ENCODE measurements at regions of chr10 and their contacts with region 1.

Region 1: GRCh38 chr10:75210282-75211006 is at the start of gene VDAC2:
- DNase-seq: peak; percentile 94 to 100 (median 98)
- H3K4me3 ChIP-seq: peak within 1 kb of the TSS; percentile 96 to 100
- H3K4me3 Mint-ChIP-seq: peak within 1 kb of the TSS; percentile 98 to 100 (median 100)
- H3K27ac ChIP-seq: peak within 1 kb of the TSS; percentile 97
- H3K27ac Mint-ChIP-seq: peak within 1 kb of the TSS; percentile 96 to 100 (median 100)
- H3K4me1 ChIP-seq: peaks cover 31% of the 10 kb centered on the region
- H3K4me1 Mint-ChIP-seq: peaks cover 18 to 35% (median 26%) of the 10 kb centered on the region in 4 donors
- H3K27me3 ChIP-seq: no peaks in the 10 kb centered on the region
- H3K27me3 Mint-ChIP-seq: no peaks in the 10 kb centered on the region
- total RNA-seq, gene VDAC2: 76.9 to 79.0 TPM

Region 2: DNA sequence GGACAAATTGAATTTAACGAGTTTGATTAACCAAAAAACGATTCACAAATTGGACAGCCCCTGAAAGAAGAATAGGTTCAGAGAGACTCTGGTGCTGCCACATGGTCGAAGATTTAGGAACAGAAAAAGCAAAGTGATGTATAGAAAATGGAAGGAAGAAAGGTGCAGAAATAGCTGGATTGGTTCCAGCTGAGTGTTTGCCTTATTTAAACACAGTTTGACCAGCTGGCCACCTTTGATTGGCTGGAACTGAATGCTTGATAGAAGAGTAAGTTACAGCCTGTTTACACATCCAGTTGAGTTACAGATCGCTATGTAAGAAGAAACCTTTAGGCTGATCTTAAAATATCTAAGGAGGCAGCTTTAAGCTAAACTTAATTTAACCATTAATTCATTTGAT is 424.4 kb before region 1 on chr10:
- CTCF ChIA-PET with region 1: no interaction called
- POLR2A ChIA-PET with region 1: no interaction called
- intact Hi-C with region 1: no loop called
- DNase-seq: no peak
- H3K4me3 ChIP-seq: no peak overlapping the region
- H3K4me3 Mint-ChIP-seq: no peak overlapping the region
- H3K27ac ChIP-seq: no peak overlapping the region
- H3K27ac Mint-ChIP-seq: no peak overlapping the region
- H3K4me1 ChIP-seq: no peaks in the 10 kb centered on the region
- H3K4me1 Mint-ChIP-seq: no peaks in the 10 kb centered on the region
- H3K27me3 ChIP-seq: no peaks in the 10 kb centered on the region
- H3K27me3 Mint-ChIP-seq: no peaks in the 10 kb centered on the region

Region 3: DNA sequence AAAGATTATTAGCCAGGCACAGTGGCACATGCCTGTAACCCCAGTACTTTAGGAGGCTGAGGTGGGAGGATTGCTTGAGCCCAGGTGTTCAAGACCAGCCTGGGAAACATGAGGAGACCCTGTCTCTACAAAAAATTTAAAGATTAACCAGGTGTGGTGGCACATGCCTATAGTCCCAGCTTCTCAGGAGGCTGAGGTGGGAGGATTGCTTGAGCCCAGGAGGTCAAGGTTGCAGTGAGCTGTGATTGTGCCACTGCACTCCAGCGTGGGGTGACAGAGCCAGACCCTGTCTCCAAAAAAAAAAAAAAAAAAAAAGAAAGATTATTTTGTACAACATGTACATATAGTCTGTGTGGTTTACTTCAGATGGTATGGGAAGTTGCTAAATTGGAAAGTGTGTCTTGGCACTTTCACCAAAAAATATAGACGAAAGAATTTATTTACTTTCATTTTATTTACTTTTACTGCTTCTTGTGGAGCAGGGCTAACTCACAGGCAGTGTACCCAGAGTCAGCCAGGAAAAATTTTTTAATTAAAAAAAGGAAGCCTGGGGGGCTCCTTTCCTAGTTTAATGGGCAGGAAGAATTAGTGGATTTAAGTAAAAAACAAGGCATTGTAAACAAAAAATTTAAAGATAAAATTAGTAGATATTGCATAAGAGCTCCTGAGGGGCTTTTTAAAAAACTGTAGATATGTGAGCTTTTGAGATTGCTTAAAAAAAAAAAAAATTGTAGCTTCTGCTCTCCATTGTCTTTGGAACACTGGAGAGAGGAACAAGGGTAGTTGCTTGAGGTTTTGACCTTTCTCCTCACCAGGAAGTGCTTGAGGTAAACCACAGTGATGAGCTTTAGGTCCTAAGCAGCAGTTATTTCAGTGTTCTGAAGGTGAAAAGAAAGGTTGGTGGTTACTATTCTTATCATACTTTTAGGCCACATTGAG is 44.5 kb before region 1 on chr10:
- CTCF ChIA-PET with region 1: interaction called, 6 read pairs
- POLR2A ChIA-PET with region 1: interaction called, 16 read pairs
- intact Hi-C with region 1: no loop called
- DNase-seq: peak in 4 of 5 donors; percentile 2 to 35 (median 28)
- H3K4me3 ChIP-seq: no peak overlapping the region
- H3K4me3 Mint-ChIP-seq: peak overlapping the region in 7 of 8 donors; percentile 42 to 79 (median 75)
- H3K27ac ChIP-seq: peak overlapping the region; percentile 50
- H3K27ac Mint-ChIP-seq: peak overlapping the region; percentile 63 to 89 (median 84)
- H3K4me1 ChIP-seq: peaks cover 31% of the 10 kb centered on the region
- H3K4me1 Mint-ChIP-seq: peaks cover 19 to 53% (median 36%) of the 10 kb centered on the region in 4 donors
- H3K27me3 ChIP-seq: no peaks in the 10 kb centered on the region
- H3K27me3 Mint-ChIP-seq: no peaks in the 10 kb centered on the region

Region 4: GRCh38 chr10:75187961-75188426 is 22.4 kb before region 1 on chr10:
- CTCF ChIA-PET with region 1: interaction called, 115 read pairs
- POLR2A ChIA-PET with region 1: interaction called, 42 read pairs
- intact Hi-C with region 1: loop called (anchors 1 kb)
- DNase-seq: peak; percentile 75 to 80 (median 76)
- H3K4me3 ChIP-seq: no peak overlapping the region
- H3K4me3 Mint-ChIP-seq: no peak overlapping the region
- H3K27ac ChIP-seq: no peak overlapping the region
- H3K27ac Mint-ChIP-seq: peak overlapping the region; percentile 61 to 90 (median 70)
- H3K4me1 ChIP-seq: peaks cover 5% of the 10 kb centered on the region
- H3K4me1 Mint-ChIP-seq: peaks cover 5 to 9% (median 5%) of the 10 kb centered on the region in 4 donors
- H3K27me3 ChIP-seq: no peaks in the 10 kb centered on the region
- H3K27me3 Mint-ChIP-seq: no peaks in the 10 kb centered on the region

Region 5: GRCh38 chr10:75197906-75198305 is 12.5 kb before region 1 on chr10:
- CTCF ChIA-PET with region 1: no interaction called
- POLR2A ChIA-PET with region 1: interaction called, 15 read pairs
- intact Hi-C with region 1: no loop called
- DNase-seq: no peak
- H3K4me3 ChIP-seq: no peak overlapping the region
- H3K4me3 Mint-ChIP-seq: peak overlapping the region in 1 of 8 donors; percentile 16
- H3K27ac ChIP-seq: no peak overlapping the region
- H3K27ac Mint-ChIP-seq: peak overlapping the region in 2 of 7 donors; percentile 13 to 69
- H3K4me1 ChIP-seq: no peaks in the 10 kb centered on the region
- H3K4me1 Mint-ChIP-seq: no peaks in the 10 kb centered on the region
- H3K27me3 ChIP-seq: no peaks in the 10 kb centered on the region
- H3K27me3 Mint-ChIP-seq: no peaks in the 10 kb centered on the region

Region 6: GRCh38 chr10:75226656-75227055 is 16.2 kb after region 1 on chr10:
- CTCF ChIA-PET with region 1: interaction called, 134 read pairs
- POLR2A ChIA-PET with region 1: interaction called, 284 read pairs
- intact Hi-C with region 1: loop called (anchors 1 kb)
- DNase-seq: no peak
- H3K4me3 ChIP-seq: no peak overlapping the region
- H3K4me3 Mint-ChIP-seq: no peak overlapping the region
- H3K27ac ChIP-seq: no peak overlapping the region
- H3K27ac Mint-ChIP-seq: peak overlapping the region; percentile 26 to 78 (median 70)
- H3K4me1 ChIP-seq: peaks cover 48% of the 10 kb centered on the region
- H3K4me1 Mint-ChIP-seq: peaks cover 35 to 63% (median 50%) of the 10 kb centered on the region in 4 donors
- H3K27me3 ChIP-seq: no peaks in the 10 kb centered on the region
- H3K27me3 Mint-ChIP-seq: no peaks in the 10 kb centered on the region

Measured in CD4-positive, alpha-beta memory T cell (primary cell).